ENCODE measurements at regions of chr6 and their contacts with region 1.

Region 1: DNA sequence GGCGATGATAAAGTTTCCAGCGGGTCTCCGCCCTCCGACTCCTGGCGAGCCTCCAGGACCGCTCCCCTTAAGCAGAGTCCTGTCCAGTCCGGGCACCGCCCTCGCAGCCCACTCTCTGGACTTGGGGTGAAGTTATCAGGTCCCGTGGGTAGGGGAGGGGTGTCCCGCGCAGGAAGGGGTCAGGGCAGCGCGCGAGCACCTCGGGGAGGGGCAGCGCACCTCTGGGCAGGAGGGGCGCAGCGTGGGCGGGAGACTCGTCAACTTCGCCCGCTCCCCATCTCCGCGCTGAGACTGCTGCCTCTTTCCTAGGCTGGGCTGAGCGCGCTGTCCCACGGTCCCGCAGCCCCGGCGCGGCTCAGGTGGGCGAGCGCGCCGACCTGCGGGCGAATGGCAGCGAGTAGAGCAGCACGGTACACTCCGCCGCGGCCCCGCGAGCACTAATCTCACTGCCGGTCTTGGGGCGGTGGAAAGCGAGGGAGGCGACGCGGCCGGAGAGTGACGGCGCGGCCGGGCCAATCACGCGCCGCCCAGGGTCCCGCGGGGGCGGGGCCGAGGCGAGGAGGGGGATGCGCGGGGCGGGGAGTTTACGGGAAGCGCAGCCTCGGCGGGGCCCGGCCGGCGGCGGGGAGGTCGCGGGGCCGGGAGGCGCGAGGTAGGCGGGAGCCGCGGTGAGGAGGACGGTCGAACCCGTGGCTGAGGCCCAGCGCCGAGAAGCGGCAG is at the start of gene MAN1A1:
- DNase-seq: peak; percentile 92
- H3K4me3 Mint-ChIP-seq: peak within 1 kb of the TSS; percentile 79
- H3K27ac Mint-ChIP-seq: peak within 1 kb of the TSS; percentile 94
- H3K4me1 Mint-ChIP-seq: peaks cover 69% of the 10 kb centered on the region
- H3K27me3 Mint-ChIP-seq: no peaks in the 10 kb centered on the region
- total RNA-seq, gene MAN1A1: 50.1 and 52.4 TPM in 2 replicates

Region 2: GRCh38 chr6:117602151-117602898 is 1747.2 kb before region 1 on chr6 and contains the start of gene GOPC:
- intact Hi-C with region 1: loop called (anchors 5 kb)
- DNase-seq: peak; percentile 94
- H3K4me3 Mint-ChIP-seq: peak within 1 kb of the TSS; percentile 99
- H3K27ac Mint-ChIP-seq: peak within 1 kb of the TSS; percentile 100
- H3K4me1 Mint-ChIP-seq: peaks cover 44% of the 10 kb centered on the region
- H3K27me3 Mint-ChIP-seq: peaks cover 2% of the 10 kb centered on the region
- total RNA-seq, gene GOPC: 23.6 and 24.3 TPM in 2 replicates

Region 3: DNA sequence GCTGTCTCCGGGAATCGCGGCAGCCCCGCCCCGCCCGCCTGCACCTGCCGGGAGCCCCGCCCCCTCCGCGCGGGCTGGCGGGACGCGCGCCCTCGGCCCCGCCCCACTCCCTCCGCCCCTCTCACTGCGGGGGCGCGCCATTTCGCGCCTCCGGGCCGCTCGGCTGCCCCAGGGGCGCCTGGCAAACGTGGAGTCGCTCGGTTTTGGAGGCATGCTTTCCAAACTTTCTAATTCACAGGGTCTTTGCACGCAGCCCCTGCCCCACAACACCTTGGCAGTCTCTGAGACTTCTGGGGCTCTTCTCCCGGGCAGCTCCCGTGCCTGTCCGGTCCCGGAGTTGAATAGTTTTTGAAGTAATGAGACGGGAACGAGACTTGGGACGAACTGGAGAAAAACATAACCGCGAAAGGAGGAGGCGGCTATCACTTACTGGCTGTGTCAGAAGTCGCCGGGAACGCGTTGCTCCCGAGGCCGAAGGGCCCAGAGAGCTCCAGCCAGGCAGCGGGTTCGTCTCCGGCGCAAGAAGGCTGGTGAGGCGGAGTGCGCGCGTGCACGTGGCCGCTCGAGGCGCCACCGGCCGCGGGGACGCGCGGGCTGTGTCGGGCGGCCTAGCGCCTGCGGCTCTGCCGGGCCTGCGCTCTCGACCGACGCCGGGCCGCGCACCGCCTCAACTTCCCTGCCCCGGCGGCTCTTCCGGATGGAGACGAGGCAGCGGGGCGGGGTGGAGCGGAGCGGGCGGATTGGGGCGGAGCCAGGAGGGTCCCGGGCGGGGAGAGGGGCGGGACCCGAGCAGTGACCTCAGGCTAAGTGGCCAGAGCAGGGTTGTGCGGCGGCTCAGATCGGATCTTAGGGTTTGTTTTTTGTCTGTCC is 414.8 kb before region 1 on chr6 and contains the start of gene MCM9:
- intact Hi-C with region 1: loop called (anchors 1 kb)
- DNase-seq: peak; percentile 86
- H3K4me3 Mint-ChIP-seq: peak within 1 kb of the TSS; percentile 91
- H3K27ac Mint-ChIP-seq: peak within 1 kb of the TSS; percentile 93
- H3K4me1 Mint-ChIP-seq: peaks cover 40% of the 10 kb centered on the region
- H3K27me3 Mint-ChIP-seq: no peaks in the 10 kb centered on the region
- total RNA-seq, gene MCM9: 19.8 and 24.4 TPM in 2 replicates

Region 4: GRCh38 chr6:119261945-119262286 is 87.6 kb before region 1 on chr6:
- intact Hi-C with region 1: loop called (anchors 2 kb)
- DNase-seq: no peak
- H3K4me3 Mint-ChIP-seq: peak overlapping the region; percentile 46
- H3K27ac Mint-ChIP-seq: peak overlapping the region; percentile 91
- H3K4me1 Mint-ChIP-seq: peaks cover 50% of the 10 kb centered on the region
- H3K27me3 Mint-ChIP-seq: no peaks in the 10 kb centered on the region

Region 5: GRCh38 chr6:119384444-119384843 is 35.0 kb after region 1 on chr6:
- intact Hi-C with region 1: no loop called
- DNase-seq: no peak
- H3K4me3 Mint-ChIP-seq: no peak overlapping the region
- H3K27ac Mint-ChIP-seq: no peak overlapping the region
- H3K4me1 Mint-ChIP-seq: no peaks in the 10 kb centered on the region
- H3K27me3 Mint-ChIP-seq: peaks cover 3% of the 10 kb centered on the region

Region 6: GRCh38 chr6:119463081-119463626 is 113.7 kb after region 1 on chr6:
- intact Hi-C with region 1: loop called (anchors 1 kb)
- DNase-seq: peak; percentile 22
- H3K4me3 Mint-ChIP-seq: peak overlapping the region; percentile 1
- H3K27ac Mint-ChIP-seq: peak overlapping the region; percentile 72
- H3K4me1 Mint-ChIP-seq: peaks cover 82% of the 10 kb centered on the region
- H3K27me3 Mint-ChIP-seq: no peaks in the 10 kb centered on the region

Region 7: GRCh38 chr6:119856136-119856535 is 506.7 kb after region 1 on chr6:
- intact Hi-C with region 1: loop called (anchors 1 kb)
- DNase-seq: no peak
- H3K4me3 Mint-ChIP-seq: peak overlapping the region; percentile 56
- H3K27ac Mint-ChIP-seq: no peak overlapping the region
- H3K4me1 Mint-ChIP-seq: peaks cover 14% of the 10 kb centered on the region
- H3K27me3 Mint-ChIP-seq: peaks cover 9% of the 10 kb centered on the region

Measured in activated T-helper 1 cell treated with anti-CD3 and anti-CD28 coated beads, Interleukin-12 subunit alpha, Interleukin-12 subunit beta, Interleukin-2, Interleukin-4 antibody, amounts not matched to agents 30 ng/mL and 10 ng/mL and 1 ng/mL, durations not matched to agents 14 hours and 24 hours and 36 hours (primary cell).